ENCODE measurements at regions of chr4 and their contacts with region 1.

Region 1: GRCh38 chr4:152500800-152501434 is 35.0 kb downstream of the FBXW7 start:
- DNase-seq: peak; percentile 58
- H3K4me3 Mint-ChIP-seq: no peak overlapping the region
- H3K27ac Mint-ChIP-seq: no peak overlapping the region
- H3K4me1 Mint-ChIP-seq: peaks cover 17% of the 10 kb centered on the region
- H3K27me3 Mint-ChIP-seq: no peaks in the 10 kb centered on the region
- CTCF ChIP-seq: peak; percentile 43

Region 2: GRCh38 chr4:151771664-151772063 is 729.3 kb before region 1 on chr4:
- CTCF ChIA-PET with region 1: no interaction called
- intact Hi-C with region 1: no loop called
- DNase-seq: no peak
- H3K4me3 Mint-ChIP-seq: no peak overlapping the region
- H3K27ac Mint-ChIP-seq: no peak overlapping the region
- H3K4me1 Mint-ChIP-seq: no peaks in the 10 kb centered on the region
- H3K27me3 Mint-ChIP-seq: peaks cover 25% of the 10 kb centered on the region
- CTCF ChIP-seq: no peak

Region 3: GRCh38 chr4:152460488-152460887 is 40.4 kb before region 1 on chr4:
- CTCF ChIA-PET with region 1: interaction called, 8 read pairs
- intact Hi-C with region 1: loop called (anchors 5 kb)
- DNase-seq: peak; percentile 6
- H3K4me3 Mint-ChIP-seq: no peak overlapping the region
- H3K27ac Mint-ChIP-seq: no peak overlapping the region
- H3K4me1 Mint-ChIP-seq: peaks cover 48% of the 10 kb centered on the region
- H3K27me3 Mint-ChIP-seq: no peaks in the 10 kb centered on the region
- CTCF ChIP-seq: no peak

Region 4: GRCh38 chr4:152572417-152573086 is 71.6 kb after region 1 on chr4:
- CTCF ChIA-PET with region 1: no interaction called
- intact Hi-C with region 1: loop called (anchors 10 kb)
- DNase-seq: peak; percentile 9
- H3K4me3 Mint-ChIP-seq: peak overlapping the region; percentile 41
- H3K27ac Mint-ChIP-seq: peak overlapping the region; percentile 86
- H3K4me1 Mint-ChIP-seq: peaks cover 42% of the 10 kb centered on the region
- H3K27me3 Mint-ChIP-seq: no peaks in the 10 kb centered on the region
- CTCF ChIP-seq: no peak